CD8-positive, alpha-beta memory T cell (primary cell): ENCODE measurements at regions of chr14 and their contacts with region 1.

Region 1: DNA sequence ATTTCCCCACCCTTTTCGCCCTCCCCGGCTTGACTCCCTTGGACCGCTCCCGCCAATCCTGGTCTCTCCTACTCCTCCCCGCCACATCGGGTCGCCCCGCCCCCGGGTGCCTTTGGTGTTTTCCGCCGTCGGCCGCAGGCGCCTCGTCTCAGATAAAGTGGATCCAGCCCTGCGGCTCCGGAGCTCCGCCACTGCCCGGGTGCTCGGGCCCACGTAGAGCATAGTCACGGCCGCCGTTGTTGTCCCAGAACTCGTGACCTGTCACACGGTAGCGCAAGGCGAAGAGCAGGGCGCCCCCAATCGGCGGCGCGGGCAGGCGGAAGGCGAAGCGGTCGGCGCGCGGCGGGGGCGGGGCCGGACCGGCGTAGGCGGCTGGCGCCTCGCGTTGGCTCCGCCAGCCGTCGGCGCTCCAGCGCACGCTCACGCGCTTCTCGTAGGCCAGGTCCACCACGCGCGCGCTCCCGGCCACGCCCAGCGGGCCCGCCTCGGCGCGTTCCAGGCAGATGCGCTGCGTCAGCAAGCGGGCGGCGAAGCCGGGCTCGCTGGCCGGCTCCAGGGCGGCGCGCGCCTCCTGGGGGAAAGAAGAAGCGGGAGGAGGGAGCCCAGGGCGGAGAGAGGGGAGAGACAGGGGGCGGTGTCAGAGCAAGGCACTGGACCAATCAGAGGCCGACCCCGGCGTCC is 1.2 kb downstream of the PPP1R3E start:
- DNase-seq: peak; percentile 93 to 99 (median 97)
- H3K4me3 ChIP-seq: peak overlapping the region; percentile 96
- H3K4me3 Mint-ChIP-seq: peak overlapping the region; percentile 86 to 98 (median 95)
- H3K27ac ChIP-seq: peak overlapping the region; percentile 96
- H3K27ac Mint-ChIP-seq: peak overlapping the region; percentile 91 to 99 (median 96)
- H3K4me1 ChIP-seq: peaks cover 21% of the 10 kb centered on the region
- H3K4me1 Mint-ChIP-seq: peaks cover 17 to 30% (median 28%) of the 10 kb centered on the region in 3 donors
- H3K27me3 ChIP-seq: peaks cover 3% of the 10 kb centered on the region
- H3K27me3 Mint-ChIP-seq: peaks cover 10 to 12% of the 10 kb centered on the region in 2 donors

Region 2: DNA sequence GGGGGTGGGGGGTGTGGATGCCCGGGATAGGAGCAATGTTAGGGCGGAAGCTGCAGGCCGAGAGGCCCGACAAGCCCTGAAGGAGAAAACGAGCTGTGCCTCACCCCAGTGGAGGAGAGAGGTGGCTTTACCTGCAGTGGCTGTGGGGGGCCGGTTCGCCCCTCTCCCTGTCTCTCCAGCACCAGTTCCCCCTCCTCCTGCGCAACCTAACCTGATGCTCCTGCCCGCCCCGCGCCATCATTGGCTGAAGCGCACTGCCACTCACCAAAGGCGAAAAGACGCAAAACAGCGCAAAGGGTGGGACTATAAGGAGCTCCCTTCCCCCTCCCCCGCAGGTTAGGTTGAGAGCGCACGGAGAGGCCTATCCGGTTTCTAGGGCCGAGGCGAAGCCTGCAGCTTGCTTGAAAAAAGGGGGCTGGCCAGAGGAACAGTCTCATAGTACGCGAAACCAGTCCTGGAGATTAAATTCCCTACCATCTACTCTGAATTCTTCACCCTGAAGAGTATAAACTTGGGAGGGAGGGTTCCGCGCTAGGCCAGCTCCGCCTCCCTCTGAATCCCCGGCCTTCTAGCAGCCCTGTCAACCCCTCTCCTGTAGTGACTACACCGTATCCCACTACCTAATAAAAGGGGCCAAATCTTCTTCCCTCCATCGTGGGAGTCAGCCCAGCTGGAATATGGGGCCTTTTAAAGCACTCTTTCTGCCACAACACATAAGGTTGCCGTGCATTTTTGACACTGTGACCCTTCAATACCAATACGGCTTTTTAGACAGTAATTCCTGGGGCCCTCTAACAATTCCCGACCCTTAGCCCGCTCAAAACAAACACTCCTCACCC is 1864.1 kb before region 1 on chr14:
- CTCF ChIA-PET with region 1: no interaction called
- POLR2A ChIA-PET with region 1: interaction called, 10 read pairs
- DNase-seq: peak; percentile 97 to 99 (median 98)
- H3K4me3 ChIP-seq: peak overlapping the region; percentile 91
- H3K4me3 Mint-ChIP-seq: peak overlapping the region; percentile 91 to 97 (median 95)
- H3K27ac ChIP-seq: peak overlapping the region; percentile 82
- H3K27ac Mint-ChIP-seq: peak overlapping the region; percentile 84 to 98 (median 95)
- H3K4me1 ChIP-seq: peaks cover 34% of the 10 kb centered on the region
- H3K4me1 Mint-ChIP-seq: peaks cover 61 to 81% (median 79%) of the 10 kb centered on the region in 3 donors
- H3K27me3 ChIP-seq: no peaks in the 10 kb centered on the region
- H3K27me3 Mint-ChIP-seq: no peaks in the 10 kb centered on the region

Region 3: DNA sequence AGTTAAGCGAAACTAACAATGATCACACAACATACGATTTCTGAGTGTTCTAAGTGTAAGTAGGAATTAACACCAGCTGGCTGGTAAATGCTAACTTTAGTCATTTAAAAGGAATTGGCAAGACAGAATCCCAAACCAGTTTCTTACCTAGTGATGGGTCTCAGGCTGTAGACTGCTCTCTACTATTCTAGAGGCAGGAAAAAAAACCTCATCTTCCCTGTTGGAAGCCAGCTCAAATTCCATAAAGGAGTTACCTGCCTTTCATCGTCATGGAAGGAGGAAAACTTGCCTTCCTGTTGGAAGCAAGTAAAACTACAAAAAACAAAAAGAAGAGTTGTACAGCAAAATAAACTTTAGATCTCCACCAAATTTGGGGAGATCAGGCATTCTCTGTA is 94.3 kb before region 1 on chr14:
- CTCF ChIA-PET with region 1: no interaction called
- POLR2A ChIA-PET with region 1: no interaction called
- DNase-seq: no peak
- H3K4me3 ChIP-seq: no peak overlapping the region
- H3K4me3 Mint-ChIP-seq: no peak overlapping the region
- H3K27ac ChIP-seq: no peak overlapping the region
- H3K27ac Mint-ChIP-seq: no peak overlapping the region
- H3K4me1 ChIP-seq: no peaks in the 10 kb centered on the region
- H3K4me1 Mint-ChIP-seq: no peaks in the 10 kb centered on the region
- H3K27me3 ChIP-seq: no peaks in the 10 kb centered on the region
- H3K27me3 Mint-ChIP-seq: peaks cover 13 to 48% of the 10 kb centered on the region in 2 donors

Region 4: DNA sequence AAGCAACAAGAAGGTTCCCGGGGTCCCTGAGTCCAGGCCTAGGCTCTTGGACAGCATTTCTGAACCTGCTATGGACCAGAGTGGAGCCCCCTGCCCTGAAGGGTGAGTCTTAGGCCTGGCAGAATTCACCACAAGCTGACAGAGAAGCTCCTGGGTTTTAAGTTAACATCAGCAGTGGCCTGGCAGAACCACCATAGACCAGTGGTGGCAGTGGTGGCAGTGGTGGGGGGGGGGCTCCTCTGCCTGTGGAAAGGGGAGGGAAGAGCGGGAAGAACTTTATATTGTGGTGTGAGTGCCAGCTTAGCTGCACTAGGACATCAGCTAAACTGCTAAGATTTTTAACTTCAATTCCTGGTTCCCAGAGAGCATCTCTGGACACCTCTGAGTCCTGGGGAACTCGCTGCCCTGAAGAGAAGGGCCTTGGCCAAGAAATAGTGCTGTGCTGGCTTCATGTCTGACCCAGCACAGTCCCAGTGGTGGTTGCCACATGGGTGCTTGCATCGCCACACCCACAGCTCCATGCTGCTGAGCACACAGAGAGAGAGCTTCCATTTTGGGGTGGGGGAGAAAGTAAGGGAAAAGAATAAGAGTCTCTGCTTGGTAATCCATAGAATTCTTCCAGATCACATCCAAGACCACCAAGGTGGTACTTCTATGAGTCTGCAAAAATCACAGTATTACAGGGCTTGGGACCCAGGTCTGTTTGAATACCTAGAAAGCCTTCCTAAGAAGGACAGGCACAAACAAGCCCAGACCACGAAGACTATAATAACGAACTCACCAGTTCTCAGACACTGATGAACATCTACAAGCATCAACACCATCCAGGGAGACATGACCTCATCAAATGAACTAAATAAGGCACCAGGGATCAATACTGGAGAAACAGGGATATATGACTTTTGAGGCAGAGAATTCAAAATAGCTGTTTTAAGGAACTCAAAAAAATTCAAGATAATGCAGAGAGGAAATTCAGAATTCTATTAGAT is 84.1 kb before region 1 on chr14:
- CTCF ChIA-PET with region 1: no interaction called
- POLR2A ChIA-PET with region 1: no interaction called
- DNase-seq: no peak
- H3K4me3 ChIP-seq: no peak overlapping the region
- H3K4me3 Mint-ChIP-seq: no peak overlapping the region
- H3K27ac ChIP-seq: no peak overlapping the region
- H3K27ac Mint-ChIP-seq: no peak overlapping the region
- H3K4me1 ChIP-seq: no peaks in the 10 kb centered on the region
- H3K4me1 Mint-ChIP-seq: no peaks in the 10 kb centered on the region
- H3K27me3 ChIP-seq: no peaks in the 10 kb centered on the region
- H3K27me3 Mint-ChIP-seq: peaks cover 24 to 52% of the 10 kb centered on the region in 2 donors

Region 5: GRCh38 chr14:23228812-23229211 is 72.6 kb before region 1 on chr14:
- CTCF ChIA-PET with region 1: no interaction called
- POLR2A ChIA-PET with region 1: no interaction called
- DNase-seq: no peak
- H3K4me3 ChIP-seq: no peak overlapping the region
- H3K4me3 Mint-ChIP-seq: no peak overlapping the region
- H3K27ac ChIP-seq: no peak overlapping the region
- H3K27ac Mint-ChIP-seq: no peak overlapping the region
- H3K4me1 ChIP-seq: no peaks in the 10 kb centered on the region
- H3K4me1 Mint-ChIP-seq: no peaks in the 10 kb centered on the region
- H3K27me3 ChIP-seq: no peaks in the 10 kb centered on the region
- H3K27me3 Mint-ChIP-seq: peaks cover 4 to 14% of the 10 kb centered on the region in 2 donors

Region 6: DNA sequence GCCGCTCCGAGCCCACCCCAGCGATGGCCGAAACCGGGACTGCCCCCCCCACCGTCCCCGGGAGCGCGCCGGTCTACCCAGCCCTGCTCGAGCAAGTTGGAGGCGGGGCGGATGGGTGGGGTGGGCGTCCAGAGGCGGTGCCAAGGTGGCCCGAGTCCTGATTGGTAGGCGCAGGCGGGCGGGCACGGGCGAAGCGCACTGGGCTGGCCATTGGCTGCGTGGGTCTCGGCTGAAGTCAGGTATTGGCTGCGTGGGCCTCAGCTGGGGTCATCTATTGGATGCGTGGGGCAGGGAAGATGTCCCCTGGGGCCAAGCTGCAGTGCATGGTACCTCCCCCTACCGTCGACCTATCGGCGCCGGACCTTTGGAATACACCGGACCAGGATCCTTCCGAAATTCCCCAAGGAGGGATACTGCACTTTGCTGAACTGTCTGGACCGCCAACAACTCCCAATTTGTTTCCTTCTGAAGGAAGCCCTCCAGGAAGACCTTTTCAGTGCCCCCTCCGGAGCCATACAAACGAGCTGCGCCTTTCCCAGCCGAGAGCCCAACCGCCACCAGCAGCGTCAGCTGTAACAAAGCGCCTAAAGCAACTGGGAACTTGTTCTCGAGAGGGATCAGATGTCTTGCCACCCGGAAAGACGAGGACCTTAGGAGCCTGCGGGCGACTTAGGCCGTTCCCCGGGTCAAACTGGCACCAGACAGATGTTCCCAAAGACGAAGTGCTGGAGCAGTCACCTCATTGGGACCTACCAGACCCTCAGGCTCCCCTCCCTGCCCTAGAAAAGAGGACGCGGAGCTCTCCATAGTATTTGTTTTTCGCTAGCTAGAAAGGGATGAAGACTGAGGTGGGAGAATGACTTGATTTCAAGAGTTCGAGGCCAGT is 15.2 kb before region 1 on chr14 and contains the start of gene HOMEZ:
- CTCF ChIA-PET with region 1: interaction called, 31 read pairs
- POLR2A ChIA-PET with region 1: interaction called, 33 read pairs
- DNase-seq: peak; percentile 94 to 98 (median 98)
- H3K4me3 ChIP-seq: peak within 1 kb of the TSS; percentile 82
- H3K4me3 Mint-ChIP-seq: peak within 1 kb of the TSS; percentile 94 to 100 (median 95)
- H3K27ac ChIP-seq: peak within 1 kb of the TSS; percentile 82
- H3K27ac Mint-ChIP-seq: peak within 1 kb of the TSS; percentile 79 to 99 (median 97)
- H3K4me1 ChIP-seq: peaks cover 13% of the 10 kb centered on the region
- H3K4me1 Mint-ChIP-seq: peaks cover 25 to 44% (median 36%) of the 10 kb centered on the region in 3 donors
- H3K27me3 ChIP-seq: no peaks in the 10 kb centered on the region
- H3K27me3 Mint-ChIP-seq: no peaks in the 10 kb centered on the region
- total RNA-seq, gene HOMEZ: 12.8 to 13.4 TPM

Region 7: DNA sequence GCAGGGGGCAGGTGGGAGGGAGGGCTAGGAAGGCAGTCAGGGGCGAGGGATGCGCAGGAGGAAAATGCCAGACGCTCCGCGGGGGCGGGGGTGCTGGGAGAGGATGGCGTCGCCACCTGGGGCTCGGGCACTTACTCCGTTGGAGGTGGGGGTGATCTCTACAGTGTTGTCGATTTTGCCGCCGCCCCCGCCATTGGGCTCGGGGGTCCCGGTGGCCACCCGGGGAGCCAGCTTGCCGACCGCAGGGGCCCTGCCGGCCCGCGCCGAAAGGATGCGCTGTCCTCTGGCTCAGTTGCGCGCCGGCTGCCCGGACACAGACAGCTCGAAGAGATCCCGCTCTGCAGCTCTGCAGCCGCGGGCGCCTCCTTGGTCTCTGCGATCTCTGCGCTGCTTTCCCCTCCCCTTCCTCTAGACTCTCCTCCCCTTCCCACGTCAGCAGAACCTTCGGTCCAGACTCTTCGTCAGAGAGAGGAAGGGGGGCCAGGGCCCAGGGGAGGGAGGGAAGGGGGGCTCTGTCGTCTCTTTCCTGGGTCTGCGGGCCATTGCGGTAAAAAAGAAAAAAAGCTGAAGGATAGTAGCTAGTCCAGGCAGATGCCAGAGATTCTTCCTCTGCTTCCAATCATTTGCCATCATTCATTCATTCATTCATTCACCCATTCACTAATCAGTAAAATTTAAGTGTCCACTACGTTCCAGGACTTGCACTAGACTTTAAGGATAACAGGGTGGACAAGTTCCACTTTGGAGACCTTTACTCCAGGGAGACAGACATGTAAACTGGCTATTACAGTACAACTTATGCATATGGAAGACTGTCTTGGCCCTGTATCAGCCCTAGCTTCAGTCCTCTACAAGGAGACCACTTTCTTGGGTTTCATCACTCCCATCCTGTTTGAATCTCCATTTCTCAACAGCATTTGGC is 51.3 kb after region 1 on chr14 and contains the start of gene SLC22A17:
- CTCF ChIA-PET with region 1: no interaction called
- POLR2A ChIA-PET with region 1: no interaction called
- DNase-seq: peak in 4 of 5 donors; percentile 11 to 71 (median 54)
- H3K4me3 ChIP-seq: peak within 1 kb of the TSS; percentile 44
- H3K4me3 Mint-ChIP-seq: peak within 1 kb of the TSS; percentile 67 to 83 (median 73)
- H3K27ac ChIP-seq: no peak within 1 kb of the TSS
- H3K27ac Mint-ChIP-seq: peak within 1 kb of the TSS in 6 of 8 donors; percentile 4 to 61 (median 31)
- H3K4me1 ChIP-seq: peaks cover 4% of the 10 kb centered on the region
- H3K4me1 Mint-ChIP-seq: peaks cover 10 to 21% (median 17%) of the 10 kb centered on the region in 3 donors
- H3K27me3 ChIP-seq: no peaks in the 10 kb centered on the region
- H3K27me3 Mint-ChIP-seq: peaks cover 46 to 66% of the 10 kb centered on the region in 2 donors
- total RNA-seq, gene SLC22A17: 2.6 to 2.8 TPM